Dorsolateral prefrontal cortex (tissue), 120 donors: ENCODE measurements at regions of chr13 and their contacts with region 1.

Region 1: GRCh38 chr13:21137696-21138095 is 38.7 kb downstream of the SKA3 start:
- DNase-seq: no peak
- H3K4me3 ChIP-seq: no peak overlapping the region
- H3K27ac ChIP-seq: no peak overlapping the region
- H3K27me3 ChIP-seq: no peaks in the 10 kb centered on the region
- CTCF ChIP-seq: no peak

Region 2: GRCh38 chr13:20320885-20321284 is 816.8 kb before region 1 on chr13:
- intact Hi-C with region 1: no loop called
- DNase-seq: no peak
- H3K4me3 ChIP-seq: no peak overlapping the region
- H3K27ac ChIP-seq: no peak overlapping the region
- H3K27me3 ChIP-seq: peaks cover 0 to 8% (median 0%) of the 10 kb centered on the region in 45 donors
- CTCF ChIP-seq: no peak

Region 3: GRCh38 chr13:20940083-20940880 is 197.4 kb before region 1 on chr13:
- intact Hi-C with region 1: loop called (anchors 2 to 10 kb)
- DNase-seq: no peak
- H3K4me3 ChIP-seq: no peak overlapping the region
- H3K27ac ChIP-seq: no peak overlapping the region
- H3K27me3 ChIP-seq: peaks cover 0 to 2% (median 0%) of the 10 kb centered on the region in 45 donors
- CTCF ChIP-seq: no peak

Region 4: GRCh38 chr13:20945952-20946383 is 191.7 kb before region 1 on chr13:
- intact Hi-C with region 1: loop called (anchors 2 to 10 kb)
- DNase-seq: no peak
- H3K4me3 ChIP-seq: peak overlapping the region in 49 of 59 donors; percentile 5 to 63 (median 34)
- H3K27ac ChIP-seq: no peak overlapping the region
- H3K27me3 ChIP-seq: peaks cover 0 to 25% (median 6%) of the 10 kb centered on the region in 45 donors
- CTCF ChIP-seq: no peak

Region 5: GRCh38 chr13:21176220-21176982 is 38.7 kb after region 1 on chr13 and contains the starts of genes MRPL57 and SKA3:
- intact Hi-C with region 1: loop called in 1 of 2 experiments (anchors 1 kb)
- DNase-seq: peak; percentile 82 to 96 (median 89)
- H3K4me3 ChIP-seq: peak within 1 kb of the TSS; percentile 71 to 100 (median 92)
- H3K27ac ChIP-seq: peak within 1 kb of the TSS; percentile 75 to 98 (median 92)
- H3K27me3 ChIP-seq: no peaks in the 10 kb centered on the region
- CTCF ChIP-seq: peak in 51 of 56 donors; percentile 4 to 65 (median 44)
- total RNA-seq, gene MRPL57: 12.7 to 28.6 (median 19.2) TPM
- total RNA-seq, gene SKA3: 0.16 to 3.6 (median 1.3) TPM in 117 of 120 experiments, not detected in the others